ENCODE measurements at regions of chr2 and their contacts with region 1.

Region 1: DNA sequence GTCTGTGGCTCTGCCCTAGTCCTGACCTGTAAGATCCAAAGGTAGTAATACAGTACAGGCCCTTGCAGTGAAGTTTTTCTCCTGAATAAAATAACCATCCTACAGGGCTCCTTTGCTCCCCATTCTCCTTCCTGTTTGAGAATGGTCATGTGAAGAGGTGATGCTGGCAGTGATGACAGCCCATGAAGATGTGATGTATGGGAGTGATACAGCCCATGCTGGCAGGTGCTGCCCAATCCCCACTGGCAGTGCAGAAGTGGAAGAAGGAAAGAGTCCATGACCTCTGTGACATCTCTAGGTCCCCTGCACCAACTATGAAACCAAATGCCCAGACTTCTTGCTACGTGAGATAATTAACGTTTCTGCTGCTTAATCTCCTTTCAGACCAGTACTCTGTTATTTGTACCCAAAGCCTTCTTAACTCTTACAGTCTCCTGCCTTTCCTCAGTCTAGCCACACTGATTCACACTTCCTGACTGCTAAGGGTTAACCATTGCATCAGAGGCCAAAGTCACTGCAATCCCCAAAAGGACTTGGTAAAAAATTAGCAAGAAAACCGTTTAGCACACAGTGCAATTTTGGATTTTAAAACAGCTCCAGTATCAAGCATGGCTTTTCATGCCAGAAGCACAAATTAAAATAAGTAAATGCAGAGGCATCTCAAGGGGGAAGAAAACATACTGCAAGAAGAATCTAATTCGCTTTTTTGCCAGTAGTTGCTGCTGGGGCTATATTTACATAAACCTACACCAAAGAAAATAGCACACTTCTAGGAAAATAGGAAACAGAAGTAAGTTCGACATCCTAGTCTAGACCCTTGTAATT is 98.0 kb downstream of the STK39 start:
- DNase-seq: no peak
- H3K4me3 ChIP-seq: no peak overlapping the region
- H3K27ac ChIP-seq: no peak overlapping the region
- H3K4me1 ChIP-seq: no peaks in the 10 kb centered on the region
- H3K27me3 ChIP-seq: no peaks in the 10 kb centered on the region
- CTCF ChIP-seq: no peak
- POLR2A ChIP-seq: no peak

Region 2: DNA sequence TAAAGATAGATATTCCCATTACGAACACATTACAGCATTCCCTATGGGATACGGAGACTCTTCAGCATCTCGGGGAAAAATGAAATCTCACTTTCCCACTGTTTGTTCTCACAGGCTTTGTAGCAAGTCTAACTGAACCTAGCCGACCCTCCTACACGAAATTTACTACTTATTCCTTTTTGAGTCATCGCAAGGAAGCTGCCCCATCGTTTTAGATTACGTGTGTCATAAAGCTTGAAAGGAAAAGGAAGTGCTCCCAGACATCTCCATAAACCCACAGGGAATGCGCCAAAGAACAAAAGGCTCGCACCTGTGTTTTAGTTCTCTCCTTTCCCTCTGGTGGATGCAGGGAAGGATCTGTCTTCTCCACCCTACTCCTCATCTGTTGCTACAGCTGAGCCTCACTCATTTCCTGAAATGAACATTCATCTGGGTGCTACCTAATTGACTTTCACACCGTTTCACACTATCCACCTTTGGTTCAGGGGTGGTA is 174.2 kb after region 1 on chr2:
- intact Hi-C with region 1: loop called (anchors 10 kb)
- DNase-seq: no peak
- H3K4me3 ChIP-seq: no peak overlapping the region
- H3K27ac ChIP-seq: no peak overlapping the region
- H3K4me1 ChIP-seq: no peaks in the 10 kb centered on the region
- H3K27me3 ChIP-seq: no peaks in the 10 kb centered on the region
- CTCF ChIP-seq: no peak
- POLR2A ChIP-seq: no peak